Adrenal gland (tissue), 19 donors: ENCODE measurements at regions of chr20 and their contacts with region 1.

Region 1: GRCh38 chr20:58309575-58310290 is at the start of gene RAB22A:
- DNase-seq: peak; percentile 74 to 86 (median 83)
- H3K4me3 ChIP-seq: peak within 1 kb of the TSS; percentile 91 to 98 (median 95)
- H3K27ac ChIP-seq: peak within 1 kb of the TSS in 4 of 5 donors; percentile 62 to 95 (median 86)
- H3K4me1 ChIP-seq: peaks cover 0 to 34% of the 10 kb centered on the region in 2 donors
- H3K27me3 ChIP-seq: no peaks in the 10 kb centered on the region
- CTCF ChIP-seq: no peak
- POLR2A ChIP-seq: peak; percentile 88 to 93
- total RNA-seq, gene RAB22A: 22.4 to 46.3 (median 28.8) TPM

Region 2: GRCh38 chr20:58246346-58246745 is 63.4 kb before region 1 on chr20:
- intact Hi-C with region 1: no loop called
- DNase-seq: peak in 1 of 7 donors; percentile 26
- H3K4me3 ChIP-seq: no peak overlapping the region
- H3K27ac ChIP-seq: no peak overlapping the region
- H3K4me1 ChIP-seq: no peaks in the 10 kb centered on the region
- H3K27me3 ChIP-seq: no peaks in the 10 kb centered on the region
- CTCF ChIP-seq: peak in 4 of 6 experiments; percentile 14 to 24 (median 22)
- POLR2A ChIP-seq: no peak

Region 3: GRCh38 chr20:58256842-58257241 is 52.9 kb before region 1 on chr20:
- intact Hi-C with region 1: loop called in 1 of 2 experiments (anchors 5 kb)
- DNase-seq: no peak
- H3K4me3 ChIP-seq: no peak overlapping the region
- H3K27ac ChIP-seq: no peak overlapping the region
- H3K4me1 ChIP-seq: peaks cover 0 to 9% of the 10 kb centered on the region in 2 donors
- H3K27me3 ChIP-seq: no peaks in the 10 kb centered on the region
- CTCF ChIP-seq: no peak
- POLR2A ChIP-seq: no peak

Region 4: DNA sequence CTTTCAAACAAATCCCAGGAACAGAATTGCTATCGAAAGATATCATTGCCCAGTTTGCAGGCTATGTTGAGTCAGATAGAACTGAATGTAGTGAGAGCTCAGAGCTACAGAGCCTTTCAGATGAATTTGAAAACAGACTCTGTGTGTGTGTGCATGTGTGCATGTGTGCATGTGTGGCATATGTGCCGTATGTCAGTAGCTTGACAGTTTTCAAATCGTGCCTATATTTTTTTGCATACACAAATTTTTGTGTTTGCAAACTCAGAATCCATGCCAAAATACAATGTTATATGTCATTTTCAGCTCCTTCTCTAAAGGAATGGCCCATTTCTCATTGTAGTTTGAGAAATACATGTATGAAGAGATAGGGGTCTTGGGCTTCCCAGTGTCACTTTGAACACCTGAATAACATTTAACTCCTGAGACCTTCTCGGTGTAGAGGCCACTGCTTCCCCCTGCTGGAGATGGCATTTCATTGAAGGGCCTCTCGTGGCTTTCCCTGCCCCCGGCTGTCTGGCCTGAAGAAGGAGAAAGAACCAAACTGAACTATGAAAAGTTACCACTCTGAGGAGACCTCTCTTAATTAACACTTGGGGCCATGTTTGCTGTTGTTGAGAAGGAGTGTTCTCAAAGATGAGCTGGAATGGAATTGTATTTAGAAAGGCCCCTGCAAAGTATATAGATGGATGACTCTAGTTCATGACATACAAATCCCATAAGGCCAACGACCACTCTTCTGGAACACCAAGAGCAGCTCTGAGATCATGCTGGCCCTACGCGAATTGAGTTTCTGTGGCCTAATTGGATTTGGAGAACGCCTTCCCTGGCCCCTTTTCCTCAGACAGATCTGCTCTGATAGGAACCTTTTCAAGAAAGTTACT is 138.0 kb after region 1 on chr20:
- intact Hi-C with region 1: loop called in 1 of 2 experiments (anchors 10 kb)
- DNase-seq: peak; percentile 43 to 84 (median 68)
- H3K4me3 ChIP-seq: no peak overlapping the region
- H3K27ac ChIP-seq: peak overlapping the region in 1 of 5 donors; percentile 24
- H3K4me1 ChIP-seq: no peaks in the 10 kb centered on the region
- H3K27me3 ChIP-seq: no peaks in the 10 kb centered on the region
- CTCF ChIP-seq: peak; percentile 64 to 79 (median 70)
- POLR2A ChIP-seq: no peak